Spleen (tissue), 13 donors: ENCODE measurements at regions of chr2 and their contacts with region 1.

Region 1: DNA sequence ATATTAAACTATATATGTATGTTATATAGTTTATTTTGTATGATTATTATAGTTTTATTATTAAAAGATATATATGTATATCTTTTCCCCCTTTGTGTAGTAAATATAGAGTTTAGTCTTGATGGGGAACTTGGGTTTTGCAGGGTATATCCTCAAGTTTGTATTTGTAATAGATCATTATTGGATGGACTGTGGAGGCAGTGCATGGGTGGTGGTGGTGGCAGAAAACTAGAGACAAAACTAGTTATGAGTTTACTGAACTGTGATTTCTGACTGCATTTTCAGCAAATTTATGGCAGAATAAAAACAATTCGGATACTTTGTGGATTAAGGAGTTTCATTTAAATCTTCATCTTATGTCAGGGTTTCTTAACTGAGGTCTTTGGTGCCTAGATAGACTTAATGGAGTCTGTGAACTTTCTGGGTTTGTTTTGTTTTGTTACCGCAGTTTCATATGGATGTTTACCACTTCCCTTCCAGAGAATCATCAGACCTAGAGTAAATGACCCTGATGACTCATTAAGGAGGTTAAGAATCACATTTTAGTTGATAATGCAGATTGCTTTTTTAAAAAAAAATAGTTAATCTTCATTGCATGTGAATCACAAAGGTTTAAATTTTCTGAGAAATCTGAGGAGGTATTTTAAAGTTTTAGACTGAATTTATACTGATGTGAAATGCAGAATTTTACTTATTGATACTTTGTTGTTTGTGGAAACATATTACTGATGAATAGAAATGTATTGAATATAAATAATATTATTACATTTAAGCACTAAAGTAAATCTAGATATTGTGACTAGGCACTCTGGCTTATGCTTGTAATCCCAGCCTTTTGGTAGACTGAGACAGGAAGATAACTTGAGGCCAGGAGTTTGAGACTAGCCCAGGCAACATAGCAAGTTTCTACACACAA is 14.5 kb downstream of the EPC2 start:
- DNase-seq: no peak
- H3K4me3 ChIP-seq: peak overlapping the region in 1 of 8 donors; percentile 15
- H3K27ac ChIP-seq: peak overlapping the region in 4 of 8 donors; percentile 19 to 54 (median 34)
- H3K4me1 ChIP-seq: peaks cover 47 to 81% (median 74%) of the 10 kb centered on the region in 6 donors
- H3K27me3 ChIP-seq: no peaks in the 10 kb centered on the region
- CTCF ChIP-seq: no peak
- POLR2A ChIP-seq: no peak

Region 2: GRCh38 chr2:148013876-148014275 is 645.2 kb before region 1 on chr2:
- intact Hi-C with region 1: loop called (anchors 10 kb)
- DNase-seq: no peak
- H3K4me3 ChIP-seq: no peak overlapping the region
- H3K27ac ChIP-seq: no peak overlapping the region
- H3K4me1 ChIP-seq: peaks cover 0 to 42% (median 13%) of the 10 kb centered on the region in 6 donors
- H3K27me3 ChIP-seq: no peaks in the 10 kb centered on the region
- CTCF ChIP-seq: no peak
- POLR2A ChIP-seq: no peak

Region 3: GRCh38 chr2:149145314-149146295 is 486.5 kb after region 1 on chr2:
- intact Hi-C with region 1: no loop called
- DNase-seq: no peak
- H3K4me3 ChIP-seq: no peak overlapping the region
- H3K27ac ChIP-seq: no peak overlapping the region
- H3K4me1 ChIP-seq: peaks cover 0 to 10% (median 0%) of the 10 kb centered on the region in 6 donors
- H3K27me3 ChIP-seq: peaks cover 0 to 4% (median 0%) of the 10 kb centered on the region in 7 donors
- CTCF ChIP-seq: no peak
- POLR2A ChIP-seq: no peak